ENCODE measurements at regions of chr5 and their contacts with region 1.

Region 1: DNA sequence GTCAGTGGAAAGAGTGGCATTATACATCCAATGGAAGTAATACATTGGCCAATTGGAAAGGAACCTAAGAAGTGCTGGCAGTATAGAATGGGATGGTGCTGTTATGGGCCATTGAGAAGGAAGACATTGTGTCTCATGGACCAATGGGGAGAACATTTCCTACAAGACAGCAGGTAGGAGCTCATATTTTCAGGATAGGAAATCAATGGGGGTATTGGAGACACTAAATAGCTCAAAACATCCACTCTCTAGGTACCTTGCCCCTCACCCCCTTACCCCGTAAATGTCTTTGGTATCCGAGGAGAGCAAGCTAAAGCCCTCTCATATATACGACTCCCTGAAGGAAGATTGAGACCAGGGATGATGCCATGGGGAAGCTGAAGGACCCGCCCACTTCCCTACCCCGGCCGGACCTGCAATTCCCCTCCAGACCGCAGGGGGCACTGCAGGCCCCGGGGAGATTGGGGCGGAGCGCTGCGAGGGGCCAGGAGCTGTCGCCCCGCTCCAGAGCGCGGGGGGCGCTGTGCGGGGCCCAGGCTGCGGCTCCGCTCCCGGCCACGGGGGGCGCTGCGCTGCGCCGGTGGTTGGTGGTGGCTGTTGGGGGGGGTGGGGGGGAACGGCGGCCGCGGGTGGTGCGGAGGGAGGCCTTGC is at the start of gene KDM3B:
- DNase-seq: peak; percentile 88 to 92 (median 89)
- H3K4me3 ChIP-seq: peak within 1 kb of the TSS; percentile 78 to 98 (median 89)
- H3K4me3 Mint-ChIP-seq: peak within 1 kb of the TSS; percentile 98
- H3K27ac ChIP-seq: peak within 1 kb of the TSS; percentile 98 to 100
- H3K27ac Mint-ChIP-seq: peak within 1 kb of the TSS; percentile 97 to 99 (median 98)
- H3K4me1 ChIP-seq: peaks cover 21 to 25% of the 10 kb centered on the region in 2 donors
- H3K4me1 Mint-ChIP-seq: peaks cover 43% of the 10 kb centered on the region
- H3K27me3 ChIP-seq: no peaks in the 10 kb centered on the region
- H3K27me3 Mint-ChIP-seq: no peaks in the 10 kb centered on the region
- CTCF ChIP-seq: peak; percentile 100
- polyA plus RNA-seq, gene KDM3B: 11.7 to 52.1 (median 17.4) TPM

Region 2: DNA sequence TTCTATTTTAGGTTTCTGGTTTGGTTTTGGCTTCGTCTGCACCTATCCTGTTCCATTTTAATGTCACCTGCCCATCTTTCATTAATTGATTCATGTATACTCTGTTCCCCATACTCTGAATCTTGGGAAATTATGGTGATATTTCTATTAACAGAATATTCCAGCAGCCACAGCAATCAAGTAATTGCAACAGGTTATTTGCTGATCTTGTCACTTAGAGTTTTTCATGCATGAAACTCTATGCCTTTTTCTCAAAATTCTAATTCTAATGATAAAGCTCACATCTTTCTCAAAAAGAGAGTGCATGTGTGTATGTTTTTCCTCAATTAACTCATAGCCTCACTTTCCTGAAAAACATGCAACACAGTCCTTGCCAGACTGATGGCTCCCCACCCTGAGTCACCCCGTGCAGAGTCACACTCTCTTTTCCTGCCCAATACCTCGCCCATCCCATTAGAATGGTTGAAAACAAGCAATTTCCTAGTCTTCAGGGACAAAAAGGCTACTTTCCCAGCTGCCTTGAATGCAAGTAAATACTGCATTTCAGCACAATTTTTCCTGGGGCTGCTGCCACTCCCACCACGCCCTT is 93.4 kb before region 1 on chr5:
- intact Hi-C with region 1: no loop called
- DNase-seq: no peak
- H3K4me3 ChIP-seq: no peak overlapping the region
- H3K4me3 Mint-ChIP-seq: no peak overlapping the region
- H3K27ac ChIP-seq: no peak overlapping the region
- H3K27ac Mint-ChIP-seq: no peak overlapping the region
- H3K4me1 ChIP-seq: no peaks in the 10 kb centered on the region
- H3K4me1 Mint-ChIP-seq: no peaks in the 10 kb centered on the region
- H3K27me3 ChIP-seq: no peaks in the 10 kb centered on the region
- H3K27me3 Mint-ChIP-seq: peaks cover 2 to 3% (median 2%) of the 10 kb centered on the region in 3 donors
- CTCF ChIP-seq: no peak

Region 3: GRCh38 chr5:138337685-138338410 is 14.3 kb before region 1 on chr5 and contains the start of gene FAM53C:
- intact Hi-C with region 1: loop called in 1 of 2 experiments (anchors 2 kb)
- DNase-seq: peak; percentile 86 to 93 (median 92)
- H3K4me3 ChIP-seq: peak within 1 kb of the TSS; percentile 73 to 90 (median 87)
- H3K4me3 Mint-ChIP-seq: peak within 1 kb of the TSS; percentile 81 to 94
- H3K27ac ChIP-seq: peak within 1 kb of the TSS; percentile 93 to 98
- H3K27ac Mint-ChIP-seq: peak within 1 kb of the TSS; percentile 98 to 100 (median 100)
- H3K4me1 ChIP-seq: peaks cover 26 to 33% of the 10 kb centered on the region in 2 donors
- H3K4me1 Mint-ChIP-seq: peaks cover 36% of the 10 kb centered on the region
- H3K27me3 ChIP-seq: no peaks in the 10 kb centered on the region
- H3K27me3 Mint-ChIP-seq: no peaks in the 10 kb centered on the region
- CTCF ChIP-seq: no peak
- polyA plus RNA-seq, gene FAM53C: 24.9 to 92.2 (median 28.7) TPM

Region 4: DNA sequence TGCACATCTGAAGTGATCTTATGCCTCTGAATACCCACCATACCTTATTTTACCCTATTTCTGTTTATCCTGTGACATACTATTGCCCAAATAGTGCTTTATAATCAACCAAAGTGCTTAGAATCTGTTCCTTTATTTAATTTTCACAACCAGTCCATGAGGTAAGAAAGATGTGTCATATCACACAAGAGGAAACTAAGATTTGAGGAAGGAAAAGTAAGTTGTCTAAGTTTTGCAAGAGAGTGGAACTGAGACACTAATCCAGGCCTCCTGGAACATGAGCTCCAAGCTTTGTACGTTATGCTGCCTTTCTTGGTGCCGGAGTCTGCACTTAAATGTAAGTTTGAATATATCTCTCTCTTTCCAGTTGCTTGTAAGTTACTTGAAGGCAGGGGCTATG is 17.5 kb after region 1 on chr5:
- intact Hi-C with region 1: loop called (anchors 2 kb)
- DNase-seq: peak; percentile 80 to 90 (median 89)
- H3K4me3 ChIP-seq: peak overlapping the region; percentile 30 to 89 (median 77)
- H3K4me3 Mint-ChIP-seq: peak overlapping the region; percentile 79 to 86
- H3K27ac ChIP-seq: peak overlapping the region; percentile 83 to 97
- H3K27ac Mint-ChIP-seq: peak overlapping the region; percentile 96 to 100 (median 99)
- H3K4me1 ChIP-seq: peaks cover 51 to 68% of the 10 kb centered on the region in 2 donors
- H3K4me1 Mint-ChIP-seq: peaks cover 60% of the 10 kb centered on the region
- H3K27me3 ChIP-seq: no peaks in the 10 kb centered on the region
- H3K27me3 Mint-ChIP-seq: no peaks in the 10 kb centered on the region
- CTCF ChIP-seq: no peak

Region 5: DNA sequence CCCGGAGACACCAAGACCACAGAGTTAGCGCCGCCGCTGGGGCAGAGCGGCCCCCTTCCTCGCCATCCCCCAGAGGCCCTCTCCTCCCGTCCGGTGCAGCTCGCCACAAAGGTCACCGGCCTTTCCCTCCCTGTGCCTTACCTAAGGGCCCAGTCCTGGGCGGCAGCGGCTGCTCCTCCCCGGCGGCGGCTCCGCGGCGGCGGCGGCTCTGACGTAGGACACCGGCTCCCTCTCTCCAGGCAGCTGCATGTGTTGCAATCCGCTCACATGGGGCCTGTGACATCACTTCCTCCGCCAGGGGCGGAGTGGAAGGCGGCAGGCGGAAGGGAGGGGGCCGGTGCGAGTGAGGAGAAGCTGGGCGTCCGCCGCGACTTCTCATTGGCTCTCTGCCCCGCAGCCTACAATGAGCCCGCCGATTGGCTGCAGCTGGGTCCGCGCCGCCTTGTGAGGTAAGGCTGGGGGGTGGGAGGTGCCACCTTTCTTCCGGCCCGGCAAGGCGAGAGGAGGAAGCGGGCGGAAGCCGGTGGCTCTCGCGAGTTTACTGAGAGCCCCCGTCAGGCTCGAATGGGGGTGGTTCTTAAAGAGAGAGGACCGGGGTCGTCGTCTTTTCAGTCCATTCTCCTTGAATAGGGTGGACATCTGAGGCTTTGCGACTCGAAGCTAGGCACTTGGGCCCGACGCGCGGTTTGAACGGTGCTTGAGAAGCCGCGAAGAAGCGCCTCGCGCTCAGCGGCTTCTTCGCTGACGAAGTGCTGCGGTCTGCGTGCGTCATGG is 190.9 kb after region 1 on chr5 and contains the start of gene ETF1:
- intact Hi-C with region 1: loop called in 1 of 2 experiments (anchors 5 kb)
- DNase-seq: peak; percentile 100
- H3K4me3 ChIP-seq: peak within 1 kb of the TSS; percentile 82 to 99 (median 98)
- H3K4me3 Mint-ChIP-seq: peak within 1 kb of the TSS; percentile 98 to 100
- H3K27ac ChIP-seq: peak within 1 kb of the TSS; percentile 96 to 100
- H3K27ac Mint-ChIP-seq: peak within 1 kb of the TSS; percentile 99 to 100 (median 100)
- H3K4me1 ChIP-seq: peaks cover 49 to 55% of the 10 kb centered on the region in 2 donors
- H3K4me1 Mint-ChIP-seq: peaks cover 61% of the 10 kb centered on the region
- H3K27me3 ChIP-seq: no peaks in the 10 kb centered on the region
- H3K27me3 Mint-ChIP-seq: no peaks in the 10 kb centered on the region
- CTCF ChIP-seq: no peak
- polyA plus RNA-seq, gene ETF1: 34.8 to 71.4 (median 61.6) TPM

Measured in CD14-positive monocyte (primary cell).